ENCODE measurements at regions of chr6 and their contacts with region 1.

Region 1: GRCh38 chr6:125858427-125859320 is 67.9 kb downstream of the NCOA7 start:
- DNase-seq: peak; percentile 80
- ATAC-seq: peak; percentile 96
- H3K4me3 ChIP-seq: no peak overlapping the region
- H3K27ac ChIP-seq: no peak overlapping the region
- H3K4me1 ChIP-seq: no peaks in the 10 kb centered on the region
- H3K27me3 ChIP-seq: no peaks in the 10 kb centered on the region
- CTCF ChIP-seq: peak; percentile 80
- POLR2A ChIP-seq: no peak
- RAD21 ChIP-seq: peak; percentile 82

Region 2: GRCh38 chr6:125066964-125067363 is 791.7 kb before region 1 on chr6:
- CTCF ChIA-PET with region 1: no interaction called
- POLR2A ChIA-PET with region 1: no interaction called
- dilution Hi-C with region 1: no loop called
- in situ Hi-C with region 1: no loop called
- intact Hi-C with region 1: no loop called
- DNase-seq: peak; percentile 30
- ATAC-seq: no peak
- H3K4me3 ChIP-seq: no peak overlapping the region
- H3K27ac ChIP-seq: no peak overlapping the region
- H3K4me1 ChIP-seq: no peaks in the 10 kb centered on the region
- H3K27me3 ChIP-seq: no peaks in the 10 kb centered on the region
- CTCF ChIP-seq: no peak
- POLR2A ChIP-seq: no peak
- RAD21 ChIP-seq: no peak

Region 3: GRCh38 chr6:125773387-125774341 is 85.0 kb before region 1 on chr6:
- CTCF ChIA-PET with region 1: no interaction called
- POLR2A ChIA-PET with region 1: no interaction called
- dilution Hi-C with region 1: no loop called
- in situ Hi-C with region 1: no loop called
- intact Hi-C with region 1: no loop called
- DNase-seq: no peak
- ATAC-seq: no peak
- H3K4me3 ChIP-seq: no peak overlapping the region
- H3K27ac ChIP-seq: no peak overlapping the region
- H3K4me1 ChIP-seq: no peaks in the 10 kb centered on the region
- H3K27me3 ChIP-seq: peaks cover 9% of the 10 kb centered on the region
- CTCF ChIP-seq: no peak
- POLR2A ChIP-seq: no peak
- RAD21 ChIP-seq: no peak

Region 4: GRCh38 chr6:125790358-125791150 is 68.1 kb before region 1 on chr6 and contains the start of gene NCOA7:
- CTCF ChIA-PET with region 1: interaction called, 6 read pairs
- POLR2A ChIA-PET with region 1: no interaction called
- dilution Hi-C with region 1: no loop called
- in situ Hi-C with region 1: no loop called
- intact Hi-C with region 1: loop called (anchors 5 kb)
- DNase-seq: peak; percentile 67
- ATAC-seq: peak; percentile 94
- H3K4me3 ChIP-seq: peak within 1 kb of the TSS; percentile 83
- H3K27ac ChIP-seq: peak within 1 kb of the TSS; percentile 82
- H3K4me1 ChIP-seq: peaks cover 8% of the 10 kb centered on the region
- H3K27me3 ChIP-seq: no peaks in the 10 kb centered on the region
- CTCF ChIP-seq: 0 out of 2 replicates have a peak, but pooled peaks have one; percentile 14
- POLR2A ChIP-seq: peak; percentile 28
- RAD21 ChIP-seq: no peak
- total RNA-seq, gene NCOA7: 12.9 and 17.2 TPM in 2 replicates

Region 5: GRCh38 chr6:125966569-125966968 is 107.9 kb after region 1 on chr6:
- CTCF ChIA-PET with region 1: no interaction called
- POLR2A ChIA-PET with region 1: no interaction called
- dilution Hi-C with region 1: no loop called
- in situ Hi-C with region 1: loop called (anchors 5 kb)
- intact Hi-C with region 1: loop called (anchors 5 kb)
- DNase-seq: no peak
- ATAC-seq: no peak
- H3K4me3 ChIP-seq: no peak overlapping the region
- H3K27ac ChIP-seq: no peak overlapping the region
- H3K4me1 ChIP-seq: no peaks in the 10 kb centered on the region
- H3K27me3 ChIP-seq: no peaks in the 10 kb centered on the region
- CTCF ChIP-seq: no peak
- POLR2A ChIP-seq: no peak
- RAD21 ChIP-seq: no peak

Region 6: GRCh38 chr6:125974214-125974866 is 115.7 kb after region 1 on chr6:
- CTCF ChIA-PET with region 1: interaction called, 6 read pairs
- POLR2A ChIA-PET with region 1: no interaction called
- dilution Hi-C with region 1: no loop called
- in situ Hi-C with region 1: loop called (anchors 5 kb)
- intact Hi-C with region 1: loop called (anchors 5 kb)
- DNase-seq: peak; percentile 68
- ATAC-seq: peak; percentile 72
- H3K4me3 ChIP-seq: no peak overlapping the region
- H3K27ac ChIP-seq: no peak overlapping the region
- H3K4me1 ChIP-seq: no peaks in the 10 kb centered on the region
- H3K27me3 ChIP-seq: no peaks in the 10 kb centered on the region
- CTCF ChIP-seq: peak; percentile 65
- POLR2A ChIP-seq: no peak
- RAD21 ChIP-seq: peak; percentile 62

Measured in IMR-90 (cell line).